Panc1 (cell line): ENCODE measurements at regions of chr3 and their contacts with region 1.

Region 1: DNA sequence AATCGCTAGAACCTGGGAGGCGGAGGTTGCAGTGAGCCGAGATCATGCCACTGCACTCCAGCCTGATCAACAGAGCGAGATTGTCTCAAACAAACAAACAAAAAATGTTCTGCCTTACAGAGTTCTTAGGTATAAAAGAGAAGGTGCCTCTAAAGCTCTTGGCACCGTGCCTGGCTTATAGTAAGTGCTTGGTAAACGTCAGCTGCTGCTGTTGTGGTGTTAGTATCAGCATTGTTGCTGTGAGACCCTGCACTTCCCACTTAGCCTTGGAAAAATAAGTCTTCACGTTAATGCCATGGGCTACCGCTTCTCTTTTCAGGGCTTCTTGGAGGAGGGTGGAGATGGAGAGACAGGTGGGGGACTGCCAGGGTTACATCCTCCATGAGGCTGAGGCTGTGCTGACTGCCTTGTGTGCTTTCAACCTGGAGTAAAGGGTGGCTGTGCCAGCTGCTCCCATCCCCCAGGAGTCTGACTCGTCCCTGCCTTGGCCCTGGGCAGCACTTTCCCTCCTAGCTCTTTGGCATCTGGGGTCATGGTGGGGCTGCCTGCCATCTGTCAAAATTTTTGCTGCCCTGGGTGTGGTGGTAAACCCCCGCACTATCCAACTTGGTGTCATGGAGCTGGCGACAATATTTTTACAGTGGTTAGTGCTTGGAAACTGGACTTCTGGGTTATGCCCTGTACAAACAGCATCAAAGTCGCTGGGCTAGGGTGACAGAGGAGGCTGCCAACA is 17.8 kb downstream of the FLNB start:
- DNase-seq: no peak
- ATAC-seq: peak; percentile 68
- H3K4me3 ChIP-seq: peak overlapping the region in 1 of 2 experiments; percentile 32; a peak in 2 of 4 replicates
- H3K27ac ChIP-seq: peak overlapping the region; percentile 75
- H3K4me1 ChIP-seq: peaks cover 77% of the 10 kb centered on the region
- H3K27me3 ChIP-seq: no peaks in the 10 kb centered on the region
- CTCF ChIP-seq: no peak

Region 2: DNA sequence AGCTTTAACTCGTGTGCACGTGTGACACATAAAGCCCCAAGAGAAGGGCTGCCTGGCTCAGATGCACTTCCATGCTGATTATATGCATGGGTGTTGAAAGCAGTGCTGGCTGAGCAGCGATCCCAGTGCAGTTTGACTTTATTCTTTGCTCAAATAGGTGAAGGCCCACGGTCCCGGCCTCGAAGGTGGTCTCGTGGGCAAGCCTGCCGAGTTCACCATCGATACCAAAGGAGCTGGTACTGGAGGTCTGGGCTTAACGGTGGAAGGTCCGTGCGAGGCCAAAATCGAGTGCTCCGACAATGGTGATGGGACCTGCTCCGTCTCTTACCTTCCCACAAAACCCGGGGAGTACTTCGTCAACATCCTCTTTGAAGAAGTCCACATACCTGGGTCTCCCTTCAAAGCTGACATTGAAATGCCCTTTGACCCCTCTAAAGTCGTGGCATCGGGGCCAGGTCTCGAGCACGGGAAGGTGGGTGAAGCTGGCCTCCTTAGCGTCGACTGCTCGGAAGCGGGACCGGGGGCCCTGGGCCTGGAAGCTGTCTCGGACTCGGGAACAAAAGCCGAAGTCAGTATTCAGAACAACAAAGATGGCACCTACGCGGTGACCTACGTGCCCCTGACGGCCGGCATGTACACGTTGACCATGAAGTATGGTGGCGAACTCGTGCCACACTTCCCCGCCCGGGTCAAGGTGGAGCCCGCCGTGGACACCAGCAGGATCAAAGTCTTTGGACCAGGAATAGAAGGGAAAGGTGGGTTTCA is 97.1 kb after region 1 on chr3:
- CTCF ChIA-PET with region 1: interaction called, 10 read pairs
- POLR2A ChIA-PET with region 1: no interaction called
- in situ Hi-C with region 1: no loop called
- intact Hi-C with region 1: no loop called
- DNase-seq: no peak
- ATAC-seq: no peak
- H3K4me3 ChIP-seq: no peak overlapping the region
- H3K27ac ChIP-seq: no peak overlapping the region
- H3K4me1 ChIP-seq: no peaks in the 10 kb centered on the region
- H3K27me3 ChIP-seq: no peaks in the 10 kb centered on the region
- CTCF ChIP-seq: no peak

Region 3: GRCh38 chr3:58206406-58207011 is 180.5 kb after region 1 on chr3:
- CTCF ChIA-PET with region 1: no interaction called
- POLR2A ChIA-PET with region 1: no interaction called
- in situ Hi-C with region 1: no loop called
- intact Hi-C with region 1: no loop called
- DNase-seq: no peak
- ATAC-seq: peak; percentile 72
- H3K4me3 ChIP-seq: no peak overlapping the region
- H3K27ac ChIP-seq: no peak overlapping the region
- H3K4me1 ChIP-seq: no peaks in the 10 kb centered on the region
- H3K27me3 ChIP-seq: no peaks in the 10 kb centered on the region
- CTCF ChIP-seq: no peak

Region 4: GRCh38 chr3:58217209-58217811 is 191.3 kb after region 1 on chr3:
- CTCF ChIA-PET with region 1: no interaction called
- POLR2A ChIA-PET with region 1: interaction called, 10 read pairs
- in situ Hi-C with region 1: no loop called
- intact Hi-C with region 1: no loop called
- DNase-seq: peak; percentile 79
- ATAC-seq: peak; percentile 96
- H3K4me3 ChIP-seq: peak overlapping the region; percentile 5 to 45; a peak in 2 of 4 replicates
- H3K27ac ChIP-seq: peak overlapping the region; percentile 17; the same call in 1 of the 2 replicates
- H3K4me1 ChIP-seq: peaks cover 11% of the 10 kb centered on the region
- H3K27me3 ChIP-seq: no peaks in the 10 kb centered on the region
- CTCF ChIP-seq: peak; percentile 87

Region 5: DNA sequence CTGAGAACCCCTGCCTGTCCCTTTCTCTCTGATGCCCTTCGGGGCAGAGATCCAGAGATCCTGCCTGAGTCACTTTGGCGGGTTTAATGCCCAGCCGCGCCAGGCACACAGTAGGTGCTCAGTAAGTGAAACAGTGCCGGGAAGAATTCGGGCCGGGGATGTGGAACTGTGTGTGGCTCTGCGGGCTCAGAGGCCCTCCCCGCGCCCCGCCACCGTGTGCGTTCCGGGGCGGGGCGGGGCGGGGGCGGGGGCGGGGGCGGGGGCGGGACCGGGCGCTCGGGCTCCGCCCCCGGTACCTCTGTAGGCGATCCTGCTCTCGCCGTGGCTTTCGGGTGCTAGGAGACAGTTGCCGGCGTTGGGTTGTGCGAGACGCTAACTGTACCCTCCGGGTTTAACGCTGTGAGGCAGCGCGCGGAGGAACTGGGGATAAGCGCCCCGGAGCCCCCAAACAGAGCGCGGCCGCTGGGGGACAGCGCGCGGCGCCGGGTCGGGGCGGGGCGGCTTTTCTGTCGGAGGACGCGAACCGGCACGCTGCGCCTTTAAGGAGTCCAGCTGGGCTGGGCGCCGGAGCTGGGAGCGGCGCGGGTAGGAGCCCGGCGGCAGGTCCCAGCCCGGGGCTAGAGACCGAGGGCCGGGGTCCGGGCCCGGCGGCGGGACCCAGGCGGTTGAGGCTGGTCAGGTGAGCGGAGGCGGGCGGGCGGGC is 211.4 kb after region 1 on chr3 and contains the start of gene ABHD6:
- CTCF ChIA-PET with region 1: interaction called, 14 read pairs
- POLR2A ChIA-PET with region 1: no interaction called
- in situ Hi-C with region 1: no loop called
- intact Hi-C with region 1: no loop called
- DNase-seq: no peak
- ATAC-seq: peak; percentile 93
- H3K4me3 ChIP-seq: peak within 1 kb of the TSS; percentile 77 to 78
- H3K27ac ChIP-seq: peak within 1 kb of the TSS; percentile 82
- H3K4me1 ChIP-seq: peaks cover 3% of the 10 kb centered on the region
- H3K27me3 ChIP-seq: no peaks in the 10 kb centered on the region
- CTCF ChIP-seq: peak; percentile 64
- total RNA-seq, gene ABHD6: 18.9 TPM